Posterior cingulate gyrus (tissue), 11 donors: ENCODE measurements at regions of chr9 and their contacts with region 1.

Region 1: DNA sequence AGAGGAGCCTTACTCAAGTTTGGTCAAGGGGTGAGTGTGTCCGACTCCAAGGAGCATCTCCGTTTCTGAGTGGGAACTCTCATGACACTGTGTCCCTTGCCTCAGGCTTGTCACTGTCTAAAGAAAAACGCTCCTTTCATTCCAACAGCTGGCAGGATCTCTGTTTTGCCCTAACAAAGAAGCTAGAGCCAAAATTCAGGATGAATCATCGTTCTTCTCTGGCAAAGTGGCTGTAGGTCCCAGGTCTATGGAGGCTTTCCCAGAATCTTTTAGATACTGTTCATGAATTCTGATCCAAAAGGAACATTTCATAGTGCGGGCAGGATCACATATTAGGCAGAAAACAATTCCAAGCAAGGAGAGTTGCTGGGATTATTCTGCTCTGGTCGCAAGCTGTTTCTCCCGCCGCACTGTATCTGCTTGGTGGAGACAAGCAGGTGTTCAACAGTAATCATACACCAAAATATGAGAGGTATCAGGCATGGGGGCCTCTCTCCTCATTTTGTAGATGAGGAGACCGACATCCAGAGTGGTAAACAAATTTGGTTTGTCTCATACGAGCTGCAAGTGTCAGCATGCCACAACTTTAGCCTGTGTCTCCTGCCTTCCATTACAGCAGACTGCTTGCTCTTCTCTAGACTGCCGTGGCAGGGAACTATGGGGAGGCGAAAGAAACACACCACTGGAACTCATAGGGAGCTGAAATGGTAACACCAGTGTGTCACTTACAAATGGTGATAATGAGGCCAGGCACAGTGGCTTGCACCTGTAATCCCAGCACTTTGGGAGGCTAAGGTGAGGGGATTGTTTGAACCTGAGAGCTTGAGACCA is 72.6 kb downstream of the ENTREP1 start:
- DNase-seq: no peak

Region 2: GRCh38 chr9:69339620-69340019 is 58.0 kb before region 1 on chr9:
- intact Hi-C with region 1: loop called (anchors 5 kb)
- DNase-seq: peak in 1 of 10 donors; percentile 59